OCI-LY7 (cell line): ENCODE measurements at regions of chr4 and their contacts with region 1.

Region 1: GRCh38 chr4:7649741-7650531 is 215.2 kb upstream of the PSAPL1 start:
- DNase-seq: peak; percentile 67
- H3K4me3 ChIP-seq: peak overlapping the region; percentile 15
- H3K27ac ChIP-seq: peak overlapping the region; percentile 80
- H3K4me1 ChIP-seq: peaks cover 31% of the 10 kb centered on the region
- CTCF ChIP-seq: 0 out of 2 replicates have a peak, but pooled peaks have one; percentile 15

Region 2: DNA sequence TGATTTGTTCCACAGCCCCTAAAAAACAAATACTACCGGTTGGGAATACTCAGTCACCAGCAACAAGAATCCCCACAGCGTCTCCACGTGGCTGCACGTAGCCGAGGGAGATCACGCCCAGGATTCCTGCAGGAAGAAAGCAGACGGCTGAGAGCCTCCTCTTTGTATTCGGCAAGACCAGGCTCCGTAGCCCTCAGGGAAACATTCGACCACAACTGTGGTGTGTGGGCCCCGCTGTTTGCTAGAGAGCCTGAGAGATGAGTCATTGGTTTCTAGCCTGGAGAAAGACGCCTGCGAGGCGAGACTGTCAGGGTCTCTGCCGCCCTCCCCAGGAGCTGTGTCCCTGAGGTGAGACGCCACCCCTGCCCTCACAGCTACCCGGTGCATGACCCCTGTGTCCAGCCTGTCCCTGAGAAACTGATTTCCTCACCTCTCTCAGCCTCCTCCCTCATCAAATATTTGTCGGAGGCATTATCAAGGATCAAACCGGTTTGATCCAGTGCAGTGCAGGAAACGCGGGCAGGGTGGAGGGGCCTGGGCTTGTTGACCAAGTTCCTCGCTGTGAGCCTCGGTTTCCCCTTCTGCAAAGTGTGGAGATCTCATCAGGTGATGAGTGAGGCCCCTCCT is 960.9 kb before region 1 on chr4:
- CTCF ChIA-PET with region 1: no interaction called
- POLR2A ChIA-PET with region 1: no interaction called
- intact Hi-C with region 1: loop called (anchors 10 kb)
- DNase-seq: no peak
- H3K4me3 ChIP-seq: no peak overlapping the region
- H3K27ac ChIP-seq: no peak overlapping the region
- H3K4me1 ChIP-seq: no peaks in the 10 kb centered on the region
- CTCF ChIP-seq: no peak

Region 3: GRCh38 chr4:7472442-7473013 is 177.4 kb before region 1 on chr4:
- CTCF ChIA-PET with region 1: no interaction called
- POLR2A ChIA-PET with region 1: no interaction called
- intact Hi-C with region 1: no loop called
- DNase-seq: no peak
- H3K4me3 ChIP-seq: no peak overlapping the region
- H3K27ac ChIP-seq: no peak overlapping the region
- H3K4me1 ChIP-seq: no peaks in the 10 kb centered on the region
- CTCF ChIP-seq: no peak

Region 4: DNA sequence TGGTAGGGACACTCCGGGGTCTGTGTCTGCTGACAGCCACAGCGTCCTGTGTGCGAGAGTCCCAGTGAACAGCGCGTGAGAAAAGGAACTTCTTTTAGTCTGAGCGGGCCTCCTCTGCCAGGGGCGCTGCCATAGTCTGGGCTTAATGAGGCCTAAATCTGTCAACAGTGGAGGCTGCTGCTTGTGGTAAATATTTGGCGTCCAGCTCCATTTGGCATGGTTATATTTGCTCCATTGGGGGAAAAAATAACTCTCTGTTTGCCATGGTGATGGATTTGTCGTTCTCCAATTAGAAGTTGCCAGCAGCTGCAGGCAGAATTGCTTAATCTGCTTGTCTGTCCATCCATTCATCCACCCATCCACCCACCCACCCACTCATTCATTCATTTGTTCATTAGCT is 143.8 kb before region 1 on chr4:
- CTCF ChIA-PET with region 1: no interaction called
- POLR2A ChIA-PET with region 1: no interaction called
- intact Hi-C with region 1: loop called (anchors 5 kb)
- DNase-seq: no peak
- H3K4me3 ChIP-seq: no peak overlapping the region
- H3K27ac ChIP-seq: no peak overlapping the region
- H3K4me1 ChIP-seq: peaks cover 6% of the 10 kb centered on the region
- CTCF ChIP-seq: no peak

Region 5: GRCh38 chr4:7539659-7540058 is 110.3 kb before region 1 on chr4:
- CTCF ChIA-PET with region 1: no interaction called
- POLR2A ChIA-PET with region 1: interaction called, 5 read pairs
- intact Hi-C with region 1: loop called (anchors 5 kb)
- DNase-seq: peak; percentile 99
- H3K4me3 ChIP-seq: peak overlapping the region; percentile 64
- H3K27ac ChIP-seq: peak overlapping the region; percentile 47
- H3K4me1 ChIP-seq: peaks cover 13% of the 10 kb centered on the region
- CTCF ChIP-seq: no peak

Region 6: GRCh38 chr4:7581477-7581876 is 68.5 kb before region 1 on chr4:
- CTCF ChIA-PET with region 1: no interaction called
- POLR2A ChIA-PET with region 1: no interaction called
- intact Hi-C with region 1: no loop called
- DNase-seq: peak; percentile 25
- H3K4me3 ChIP-seq: no peak overlapping the region
- H3K27ac ChIP-seq: no peak overlapping the region
- H3K4me1 ChIP-seq: no peaks in the 10 kb centered on the region
- CTCF ChIP-seq: no peak

Region 7: DNA sequence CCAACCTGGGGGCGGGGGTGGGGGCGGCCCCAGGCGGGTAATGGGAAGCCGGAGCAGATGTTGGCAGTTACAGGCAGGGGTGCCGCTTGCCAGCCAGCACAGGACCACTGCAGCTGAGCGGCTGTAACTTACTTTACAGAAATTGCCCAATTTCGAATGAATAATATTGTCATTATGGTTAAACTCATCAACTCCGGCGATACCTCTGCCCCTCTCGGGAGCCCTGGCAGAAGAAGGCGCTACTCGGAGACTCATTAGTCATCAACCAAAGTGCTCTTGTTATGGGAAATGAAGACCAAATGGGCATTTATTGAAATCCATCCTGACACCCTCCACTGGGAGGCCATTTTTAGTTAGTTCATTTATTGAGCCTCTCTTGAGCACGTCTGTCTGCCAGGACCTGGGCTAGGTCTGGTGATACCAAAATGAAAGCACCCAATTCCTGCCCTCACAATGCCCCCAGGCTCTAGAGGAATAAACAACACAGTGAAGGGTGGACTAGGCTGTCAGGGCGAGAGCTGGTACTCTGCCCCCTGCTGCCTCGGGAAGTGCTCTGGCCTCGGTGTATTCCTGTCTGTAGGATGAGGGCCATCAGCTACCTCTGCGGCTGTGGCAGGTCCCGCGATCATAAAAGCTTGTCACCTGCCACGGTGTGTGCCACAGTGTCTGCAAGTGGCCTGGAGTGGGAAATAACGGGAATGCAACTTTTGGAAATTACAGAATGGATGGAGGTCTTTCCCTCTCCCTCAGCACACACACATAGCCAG is 56.1 kb before region 1 on chr4:
- CTCF ChIA-PET with region 1: no interaction called
- POLR2A ChIA-PET with region 1: no interaction called
- intact Hi-C with region 1: no loop called
- DNase-seq: no peak
- H3K4me3 ChIP-seq: no peak overlapping the region
- H3K27ac ChIP-seq: no peak overlapping the region
- H3K4me1 ChIP-seq: no peaks in the 10 kb centered on the region
- CTCF ChIP-seq: no peak